ENCODE measurements at regions of chr6 and their contacts with region 1.

Region 1: GRCh38 chr6:114747987-114748630 is 405.3 kb upstream of the HS3ST5 start:
- DNase-seq: peak; percentile 4 to 28 (median 16)
- ATAC-seq: no peak
- H3K4me3 ChIP-seq: no peak overlapping the region
- H3K27ac ChIP-seq: no peak overlapping the region
- H3K4me1 ChIP-seq: no peaks in the 10 kb centered on the region
- H3K27me3 ChIP-seq: no peaks in the 10 kb centered on the region
- CTCF ChIP-seq: peak in 1 of 3 experiments; percentile 41; a peak in 2 of 6 replicates
- EP300 ChIP-seq: no peak
- POLR2A ChIP-seq: no peak
- RAD21 ChIP-seq: peak; percentile 45 to 51

Region 2: GRCh38 chr6:114690625-114691024 is 57.5 kb before region 1 on chr6:
- CTCF ChIA-PET with region 1: no interaction called
- POLR2A ChIA-PET with region 1: no interaction called
- in situ Hi-C with region 1: no loop called
- intact Hi-C with region 1: no loop called
- DNase-seq: no peak
- ATAC-seq: no peak
- H3K4me3 ChIP-seq: no peak overlapping the region
- H3K27ac ChIP-seq: no peak overlapping the region
- H3K4me1 ChIP-seq: no peaks in the 10 kb centered on the region
- H3K27me3 ChIP-seq: no peaks in the 10 kb centered on the region
- CTCF ChIP-seq: no peak
- EP300 ChIP-seq: no peak
- POLR2A ChIP-seq: no peak
- RAD21 ChIP-seq: no peak

Region 3: DNA sequence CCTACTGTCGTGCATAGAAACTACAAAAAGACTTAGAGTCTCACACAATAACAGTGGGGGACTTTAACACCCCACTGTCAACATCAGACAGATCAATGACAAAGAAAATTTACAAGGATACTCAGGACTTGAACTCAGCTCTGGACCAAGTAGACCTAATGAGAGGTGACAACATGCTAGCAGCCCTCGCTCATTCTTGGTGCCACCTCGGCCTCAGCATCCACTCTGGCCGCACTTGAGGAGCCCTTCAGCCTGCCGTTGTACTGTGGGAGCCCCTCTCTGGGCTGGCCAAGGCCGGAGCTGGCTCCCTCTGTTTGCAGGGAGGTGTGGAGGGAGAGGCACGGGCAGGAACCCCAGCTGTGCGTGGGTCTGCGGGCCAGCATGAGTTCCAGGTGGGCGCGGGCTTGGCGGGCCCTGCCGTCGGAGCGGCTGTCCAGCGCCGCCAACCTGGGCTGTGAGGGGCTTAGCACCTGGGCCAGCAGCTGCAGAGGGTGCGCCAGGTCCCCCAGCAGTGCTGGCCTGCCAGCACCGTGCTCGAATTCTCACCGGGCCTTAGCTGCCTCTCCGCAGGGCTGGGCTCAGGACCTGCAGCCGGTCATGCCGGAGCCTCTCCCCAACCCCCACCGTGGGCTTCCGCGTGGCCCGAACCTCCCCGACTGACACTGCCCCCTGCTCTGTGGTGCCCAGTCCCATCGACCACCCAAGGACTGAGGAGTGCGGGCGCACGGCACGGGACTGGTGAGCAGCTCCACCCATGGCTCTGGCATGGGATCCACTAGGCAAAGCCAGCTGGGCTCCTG is 1107.0 kb after region 1 on chr6:
- CTCF ChIA-PET with region 1: no interaction called
- POLR2A ChIA-PET with region 1: no interaction called
- in situ Hi-C with region 1: no loop called
- intact Hi-C with region 1: no loop called
- DNase-seq: no peak
- ATAC-seq: no peak
- H3K4me3 ChIP-seq: no peak overlapping the region
- H3K27ac ChIP-seq: no peak overlapping the region
- H3K4me1 ChIP-seq: no peaks in the 10 kb centered on the region; a peak in 1 of 5 replicates
- H3K27me3 ChIP-seq: no peaks in the 10 kb centered on the region
- CTCF ChIP-seq: no peak
- EP300 ChIP-seq: no peak
- POLR2A ChIP-seq: no peak
- RAD21 ChIP-seq: no peak

Region 4: GRCh38 chr6:115896538-115897129 is 1148.5 kb after region 1 on chr6:
- CTCF ChIA-PET with region 1: no interaction called
- POLR2A ChIA-PET with region 1: no interaction called
- in situ Hi-C with region 1: no loop called
- intact Hi-C with region 1: loop called (anchors 1 kb)
- DNase-seq: peak; percentile 17 to 39 (median 25)
- ATAC-seq: peak; percentile 72
- H3K4me3 ChIP-seq: no peak overlapping the region
- H3K27ac ChIP-seq: no peak overlapping the region
- H3K4me1 ChIP-seq: no peaks in the 10 kb centered on the region
- H3K27me3 ChIP-seq: no peaks in the 10 kb centered on the region
- CTCF ChIP-seq: peak; percentile 33 to 63 (median 54); a peak in 5 of 6 replicates
- EP300 ChIP-seq: no peak
- POLR2A ChIP-seq: no peak
- RAD21 ChIP-seq: peak; percentile 73

Measured in K562 (cell line).